Natural killer cell (primary cell): ENCODE measurements at regions of chr2 and their contacts with region 1.

Region 1: DNA sequence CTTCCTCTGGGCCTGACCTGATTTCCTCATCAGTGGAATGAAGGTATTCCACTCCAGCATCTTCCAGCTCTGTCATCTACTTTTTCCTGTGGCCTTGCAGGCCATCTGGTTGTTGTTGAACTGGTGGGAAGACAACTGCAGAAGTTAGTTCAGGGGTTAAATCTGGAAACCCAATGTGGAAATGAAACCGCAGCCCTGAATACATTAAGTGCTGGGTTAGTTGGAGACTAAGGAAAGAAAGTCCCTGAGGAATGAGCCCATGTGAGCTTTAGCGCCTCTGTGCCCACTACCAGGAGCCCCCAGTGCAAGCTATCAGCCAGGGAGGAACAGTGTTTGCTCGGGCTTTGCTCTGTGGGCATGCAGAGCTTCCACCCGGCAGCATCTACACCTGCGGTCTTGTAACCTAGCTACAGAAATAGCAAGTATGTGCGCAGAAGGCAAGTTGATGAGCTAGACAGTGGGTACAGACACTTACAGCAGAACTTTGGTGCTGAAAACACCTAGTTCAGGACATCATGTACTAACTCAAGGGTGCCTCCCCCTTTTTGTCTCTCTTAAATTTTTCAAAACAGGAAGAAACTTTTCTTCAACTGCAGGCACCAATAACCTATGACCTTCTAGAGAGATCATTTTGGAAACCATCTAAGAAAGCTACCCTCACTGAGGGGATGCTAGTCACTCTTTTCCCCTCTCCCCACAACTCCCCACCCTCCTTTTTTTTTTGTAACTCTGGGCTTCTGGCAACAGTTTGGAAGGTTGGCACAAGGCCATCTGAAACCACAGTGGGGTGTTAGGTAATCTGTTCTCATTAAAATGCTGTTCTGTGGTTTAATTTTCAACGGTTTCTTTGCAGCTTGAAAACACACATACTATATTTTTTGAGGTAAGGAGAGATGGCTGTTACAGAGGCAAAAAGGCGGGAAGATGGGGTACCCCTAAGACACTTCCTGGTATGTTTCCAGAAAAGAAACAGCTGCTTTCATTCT is 18.3 kb upstream of the CXCR4 start:
- DNase-seq: peak; percentile 64 to 96
- ATAC-seq: peak; percentile 61 to 87 (median 81)
- H3K4me3 ChIP-seq: no peak overlapping the region
- H3K4me3 Mint-ChIP-seq: peak overlapping the region; percentile 62
- H3K27ac ChIP-seq: peak overlapping the region; percentile 89
- H3K27ac Mint-ChIP-seq: peak overlapping the region; percentile 93 to 99
- H3K4me1 ChIP-seq: peaks cover 79% of the 10 kb centered on the region
- H3K4me1 Mint-ChIP-seq: peaks cover 71 to 74% of the 10 kb centered on the region in 2 donors
- H3K27me3 ChIP-seq: no peaks in the 10 kb centered on the region
- H3K27me3 Mint-ChIP-seq: no peaks in the 10 kb centered on the region
- CTCF ChIP-seq: no peak

Region 2: DNA sequence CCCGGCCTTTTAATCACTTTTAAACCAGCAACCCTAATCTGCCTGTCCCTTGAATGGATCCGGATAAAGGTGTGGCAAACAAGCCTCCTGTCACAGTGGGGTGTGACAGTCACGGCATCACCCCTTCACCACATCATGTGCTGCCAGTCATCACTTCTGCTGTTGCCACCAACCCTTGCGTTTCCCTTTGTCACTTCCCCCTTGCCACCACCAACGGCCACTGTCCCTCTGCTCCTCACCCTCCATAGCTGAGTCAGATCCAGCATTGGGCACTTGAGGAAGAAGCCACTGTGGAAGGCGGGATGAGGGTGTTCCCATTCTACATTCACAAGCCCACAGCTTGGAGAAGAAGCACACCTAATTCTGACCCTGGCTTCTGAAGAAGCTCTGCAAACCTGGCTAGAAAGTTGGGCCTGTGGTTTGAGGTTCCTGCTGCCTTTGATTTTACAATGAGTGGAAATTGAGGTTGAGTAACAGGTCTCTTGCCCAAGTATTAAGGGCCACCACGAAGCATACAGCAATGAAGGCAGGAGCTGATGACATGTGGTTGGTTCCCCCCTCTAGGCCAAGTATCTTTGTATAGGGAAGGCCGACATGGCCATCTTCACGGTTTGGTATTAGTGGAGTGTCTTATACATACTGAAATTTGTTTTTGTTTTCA is 127.9 kb before region 1 on chr2:
- intact Hi-C with region 1: loop called (anchors 1 kb)
- DNase-seq: peak; percentile 70 to 88
- ATAC-seq: peak; percentile 88 to 95 (median 93)
- H3K4me3 ChIP-seq: no peak overlapping the region
- H3K4me3 Mint-ChIP-seq: peak overlapping the region; percentile 57
- H3K27ac ChIP-seq: peak overlapping the region; percentile 59
- H3K27ac Mint-ChIP-seq: peak overlapping the region; percentile 88 to 91
- H3K4me1 ChIP-seq: peaks cover 28% of the 10 kb centered on the region
- H3K4me1 Mint-ChIP-seq: peaks cover 20 to 28% of the 10 kb centered on the region in 2 donors
- H3K27me3 ChIP-seq: no peaks in the 10 kb centered on the region
- H3K27me3 Mint-ChIP-seq: peaks cover 0 to 6% of the 10 kb centered on the region in 2 donors
- CTCF ChIP-seq: no peak

Region 3: DNA sequence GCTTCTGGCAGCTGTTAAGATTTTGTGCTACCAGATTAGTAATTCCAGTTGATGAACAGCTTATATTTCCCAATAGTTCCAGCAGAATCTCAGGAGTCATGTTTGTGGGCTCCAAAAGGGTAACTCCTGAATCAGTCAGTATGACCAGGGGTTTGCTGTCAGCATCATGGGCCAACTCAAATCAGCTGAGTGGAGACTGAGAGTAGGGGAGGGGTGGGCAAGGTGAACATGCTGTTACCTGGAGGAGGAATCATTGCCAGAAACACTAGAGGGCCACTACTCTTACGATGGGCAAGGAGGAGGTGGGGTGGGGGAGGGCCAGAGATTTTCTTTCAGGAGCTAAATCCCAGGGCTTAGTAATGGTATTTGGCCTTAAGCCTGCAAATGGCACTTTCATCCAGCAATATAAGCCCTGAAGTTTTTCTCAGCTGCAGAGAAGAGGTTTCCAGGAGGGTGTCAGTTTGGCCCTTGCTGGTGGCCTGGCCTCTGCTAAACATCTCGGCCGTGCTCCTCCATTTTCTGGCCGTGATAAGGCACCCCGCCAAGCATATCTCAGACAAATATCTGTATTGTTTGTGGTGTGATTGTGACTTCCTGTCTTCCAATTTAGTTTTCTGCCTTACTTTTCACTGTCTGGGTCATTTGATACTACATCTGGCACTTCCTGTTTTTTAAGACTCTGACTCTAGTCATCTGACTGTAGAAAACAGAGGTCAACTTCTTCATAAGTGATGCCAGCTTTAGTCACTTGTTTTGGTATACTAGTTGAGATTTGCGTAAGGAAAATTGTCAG is 102.3 kb after region 1 on chr2:
- intact Hi-C with region 1: loop called (anchors 2 kb)
- DNase-seq: peak; percentile 33 to 81
- ATAC-seq: peak; percentile 61 to 85 (median 77)
- H3K4me3 ChIP-seq: no peak overlapping the region
- H3K4me3 Mint-ChIP-seq: peak overlapping the region; percentile 11
- H3K27ac ChIP-seq: peak overlapping the region; percentile 94
- H3K27ac Mint-ChIP-seq: peak overlapping the region; percentile 93 to 97
- H3K4me1 ChIP-seq: peaks cover 43% of the 10 kb centered on the region
- H3K4me1 Mint-ChIP-seq: peaks cover 54 to 63% of the 10 kb centered on the region in 2 donors
- H3K27me3 ChIP-seq: no peaks in the 10 kb centered on the region
- H3K27me3 Mint-ChIP-seq: peaks cover 0 to 3% of the 10 kb centered on the region in 2 donors
- CTCF ChIP-seq: no peak

Region 4: GRCh38 chr2:136327162-136327852 is 191.1 kb after region 1 on chr2:
- intact Hi-C with region 1: loop called (anchors 1 kb)
- DNase-seq: peak; percentile 64 to 92
- ATAC-seq: peak; percentile 90 to 92 (median 92)
- H3K4me3 ChIP-seq: peak overlapping the region; percentile 19
- H3K4me3 Mint-ChIP-seq: peak overlapping the region; percentile 73
- H3K27ac ChIP-seq: peak overlapping the region; percentile 91
- H3K27ac Mint-ChIP-seq: peak overlapping the region; percentile 86 to 91
- H3K4me1 ChIP-seq: peaks cover 18% of the 10 kb centered on the region
- H3K4me1 Mint-ChIP-seq: peaks cover 16 to 38% of the 10 kb centered on the region in 2 donors
- H3K27me3 ChIP-seq: no peaks in the 10 kb centered on the region
- H3K27me3 Mint-ChIP-seq: no peaks in the 10 kb centered on the region
- CTCF ChIP-seq: no peak